Activated T-helper 1 cell treated with anti-CD3 and anti-CD28 coated beads, Interleukin-12 subunit alpha, Interleukin-12 subunit beta, Interleukin-2, Interleukin-4 antibody, amounts not matched to agents 30 ng/mL and 10 ng/mL and 1 ng/mL, durations not matched to agents 14 hours and 24 hours and 36 hours (primary cell): ENCODE measurements at regions of chr1 and their contacts with region 1.

Region 1: DNA sequence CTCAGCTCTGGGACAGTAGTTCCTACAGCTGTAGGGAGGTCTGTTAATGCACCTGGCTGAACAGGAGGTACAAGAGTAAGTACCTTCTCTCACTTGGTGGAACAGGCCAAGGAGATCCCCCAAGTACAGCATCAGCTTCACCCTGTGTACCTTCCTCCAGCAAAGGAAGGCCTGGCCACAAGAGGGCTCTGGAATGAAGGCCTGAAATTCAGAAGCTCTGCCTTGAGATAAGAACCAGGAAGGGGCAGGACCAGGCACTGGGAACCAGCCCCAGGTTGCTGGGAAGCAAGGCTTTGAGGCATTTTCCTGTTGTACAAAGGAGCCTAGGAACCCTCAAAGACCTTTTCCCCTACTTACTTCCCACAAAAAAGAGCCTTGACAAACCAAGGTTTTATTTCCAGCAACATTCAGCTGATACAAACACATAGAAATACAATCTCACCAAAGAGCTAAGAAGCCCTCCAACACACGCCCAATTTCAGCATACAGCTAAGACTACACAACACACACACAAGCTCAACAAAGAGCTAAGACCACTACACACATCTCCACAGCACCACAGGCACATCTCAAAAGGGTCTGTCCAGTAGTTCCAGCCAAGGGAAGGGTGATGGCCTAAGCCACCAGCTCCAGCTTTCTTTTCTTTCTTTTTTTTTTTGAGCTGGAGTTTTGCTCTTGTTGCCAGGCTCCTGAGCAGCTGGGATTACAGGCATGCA is 23.5 kb downstream of the F11R start:
- DNase-seq: peak; percentile 41
- H3K4me3 Mint-ChIP-seq: no peak overlapping the region
- H3K27ac Mint-ChIP-seq: peak overlapping the region; percentile 47
- H3K4me1 Mint-ChIP-seq: peaks cover 33% of the 10 kb centered on the region
- H3K27me3 Mint-ChIP-seq: no peaks in the 10 kb centered on the region

Region 2: GRCh38 chr1:161013488-161014230 is 16.2 kb after region 1 on chr1:
- intact Hi-C with region 1: no loop called
- DNase-seq: peak; percentile 61
- H3K4me3 Mint-ChIP-seq: peak overlapping the region; percentile 81
- H3K27ac Mint-ChIP-seq: peak overlapping the region; percentile 96
- H3K4me1 Mint-ChIP-seq: peaks cover 31% of the 10 kb centered on the region
- H3K27me3 Mint-ChIP-seq: no peaks in the 10 kb centered on the region

Region 3: GRCh38 chr1:161098210-161099068 is 101.0 kb after region 1 on chr1 and contains the start of gene KLHDC9:
- intact Hi-C with region 1: loop called (anchors 2 kb)
- DNase-seq: peak; percentile 68
- H3K4me3 Mint-ChIP-seq: peak within 1 kb of the TSS; percentile 80
- H3K27ac Mint-ChIP-seq: peak within 1 kb of the TSS; percentile 96
- H3K4me1 Mint-ChIP-seq: peaks cover 39% of the 10 kb centered on the region
- H3K27me3 Mint-ChIP-seq: peaks cover 2% of the 10 kb centered on the region
- total RNA-seq, gene KLHDC9: not detected in 2 replicates

Region 4: GRCh38 chr1:161139765-161140164 is 142.3 kb after region 1 on chr1:
- intact Hi-C with region 1: loop called (anchors 2 kb)
- DNase-seq: no peak
- H3K4me3 Mint-ChIP-seq: no peak overlapping the region
- H3K27ac Mint-ChIP-seq: no peak overlapping the region
- H3K4me1 Mint-ChIP-seq: peaks cover 5% of the 10 kb centered on the region
- H3K27me3 Mint-ChIP-seq: no peaks in the 10 kb centered on the region